ENCODE measurements at regions of chr15 and their contacts with region 1.

Region 1: GRCh38 chr15:90931737-90932659 is at the start of gene HDDC3:
- DNase-seq: peak; percentile 86 to 93 (median 88)
- H3K4me3 ChIP-seq: peak within 1 kb of the TSS; percentile 95 to 96
- H3K4me3 Mint-ChIP-seq: peak within 1 kb of the TSS; percentile 94 to 99 (median 98)
- H3K27ac ChIP-seq: peak within 1 kb of the TSS; percentile 82
- H3K27ac Mint-ChIP-seq: peak within 1 kb of the TSS; percentile 87 to 99 (median 99)
- H3K4me1 ChIP-seq: peaks cover 58% of the 10 kb centered on the region
- H3K4me1 Mint-ChIP-seq: peaks cover 35 to 77% (median 54%) of the 10 kb centered on the region in 4 donors
- H3K27me3 ChIP-seq: no peaks in the 10 kb centered on the region
- H3K27me3 Mint-ChIP-seq: no peaks in the 10 kb centered on the region
- total RNA-seq, gene HDDC3: 27.4 to 28.3 TPM

Region 2: GRCh38 chr15:90387537-90388461 is 544.2 kb before region 1 on chr15 and contains the start of gene IQGAP1:
- CTCF ChIA-PET with region 1: no interaction called
- POLR2A ChIA-PET with region 1: interaction called, 10 read pairs
- intact Hi-C with region 1: no loop called
- DNase-seq: peak; percentile 92 to 97 (median 95)
- H3K4me3 ChIP-seq: peak within 1 kb of the TSS; percentile 70 to 85
- H3K4me3 Mint-ChIP-seq: peak within 1 kb of the TSS; percentile 89 to 96 (median 93)
- H3K27ac ChIP-seq: peak within 1 kb of the TSS; percentile 84
- H3K27ac Mint-ChIP-seq: peak within 1 kb of the TSS; percentile 93 to 98 (median 96)
- H3K4me1 ChIP-seq: peaks cover 42% of the 10 kb centered on the region
- H3K4me1 Mint-ChIP-seq: peaks cover 36 to 54% (median 48%) of the 10 kb centered on the region in 4 donors
- H3K27me3 ChIP-seq: no peaks in the 10 kb centered on the region
- H3K27me3 Mint-ChIP-seq: no peaks in the 10 kb centered on the region
- total RNA-seq, gene IQGAP1: 128 to 132 TPM

Region 3: GRCh38 chr15:90808517-90809235 is 123.3 kb before region 1 on chr15:
- CTCF ChIA-PET with region 1: no interaction called
- POLR2A ChIA-PET with region 1: no interaction called
- intact Hi-C with region 1: no loop called
- DNase-seq: no peak
- H3K4me3 ChIP-seq: no peak overlapping the region
- H3K4me3 Mint-ChIP-seq: peak overlapping the region in 1 of 8 donors; percentile 21
- H3K27ac ChIP-seq: no peak overlapping the region
- H3K27ac Mint-ChIP-seq: peak overlapping the region in 2 of 7 donors; percentile 25 to 29
- H3K4me1 ChIP-seq: peaks cover 6% of the 10 kb centered on the region
- H3K4me1 Mint-ChIP-seq: peaks cover 11 to 15% (median 12%) of the 10 kb centered on the region in 4 donors
- H3K27me3 ChIP-seq: no peaks in the 10 kb centered on the region
- H3K27me3 Mint-ChIP-seq: no peaks in the 10 kb centered on the region

Region 4: GRCh38 chr15:90820798-90821149 is 111.2 kb before region 1 on chr15:
- CTCF ChIA-PET with region 1: no interaction called
- POLR2A ChIA-PET with region 1: no interaction called
- intact Hi-C with region 1: no loop called
- DNase-seq: no peak
- H3K4me3 ChIP-seq: no peak overlapping the region
- H3K4me3 Mint-ChIP-seq: no peak overlapping the region
- H3K27ac ChIP-seq: no peak overlapping the region
- H3K27ac Mint-ChIP-seq: peak overlapping the region in 1 of 7 donors; percentile 64
- H3K4me1 ChIP-seq: peaks cover 21% of the 10 kb centered on the region
- H3K4me1 Mint-ChIP-seq: peaks cover 1 to 17% (median 10%) of the 10 kb centered on the region in 4 donors
- H3K27me3 ChIP-seq: no peaks in the 10 kb centered on the region
- H3K27me3 Mint-ChIP-seq: no peaks in the 10 kb centered on the region

Region 5: GRCh38 chr15:90869601-90870353 is 62.2 kb before region 1 on chr15:
- CTCF ChIA-PET with region 1: interaction called, 4 read pairs
- POLR2A ChIA-PET with region 1: interaction called, 11 read pairs
- intact Hi-C with region 1: no loop called
- DNase-seq: peak in 1 of 5 donors; percentile 69
- H3K4me3 ChIP-seq: peak overlapping the region in 1 of 2 donors; percentile 42
- H3K4me3 Mint-ChIP-seq: peak overlapping the region; percentile 84 to 96 (median 88)
- H3K27ac ChIP-seq: peak overlapping the region; percentile 68
- H3K27ac Mint-ChIP-seq: peak overlapping the region; percentile 92 to 98 (median 94)
- H3K4me1 ChIP-seq: peaks cover 46% of the 10 kb centered on the region
- H3K4me1 Mint-ChIP-seq: peaks cover 23 to 65% (median 40%) of the 10 kb centered on the region in 4 donors
- H3K27me3 ChIP-seq: no peaks in the 10 kb centered on the region
- H3K27me3 Mint-ChIP-seq: no peaks in the 10 kb centered on the region

Region 6: DNA sequence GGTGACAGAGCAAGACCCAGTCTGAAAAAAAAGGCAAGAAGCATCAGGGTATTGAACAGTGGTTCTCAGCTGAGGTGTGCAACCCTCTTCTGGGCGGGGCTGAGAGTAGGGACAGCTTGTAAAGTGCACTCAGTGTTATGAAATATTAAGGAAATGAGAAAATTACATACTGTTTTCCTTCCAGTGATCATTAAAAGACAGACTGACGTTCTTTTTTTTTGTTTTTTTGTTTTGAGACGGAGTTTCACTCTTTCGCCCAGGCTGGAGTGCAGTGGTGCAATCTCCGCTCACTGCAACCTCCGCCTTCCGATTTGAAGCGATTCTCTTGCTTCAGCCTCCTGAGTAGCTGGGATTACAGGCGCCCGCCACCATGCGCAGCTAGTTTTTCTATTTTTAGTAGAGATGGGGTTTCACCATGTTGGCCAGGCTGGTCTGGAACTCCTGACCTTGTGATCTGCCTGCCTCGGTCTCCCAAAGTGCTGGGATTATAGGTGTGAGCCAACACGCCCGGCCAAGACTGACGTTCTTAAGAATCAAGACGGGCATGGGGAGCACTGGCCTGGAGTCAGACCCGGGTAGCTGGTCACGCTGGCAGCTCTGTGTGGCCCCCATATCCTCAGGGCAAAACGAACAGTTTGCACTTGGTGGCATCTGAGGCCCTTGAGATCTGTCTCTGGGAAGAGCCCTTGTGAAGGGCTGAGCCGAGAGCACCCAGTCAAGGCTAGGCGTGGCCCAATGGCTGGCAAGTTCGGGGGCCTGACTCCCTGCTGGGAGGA is 17.5 kb before region 1 on chr15:
- CTCF ChIA-PET with region 1: interaction called, 344 read pairs
- POLR2A ChIA-PET with region 1: interaction called, 40 read pairs
- intact Hi-C with region 1: no loop called
- DNase-seq: no peak
- H3K4me3 ChIP-seq: no peak overlapping the region
- H3K4me3 Mint-ChIP-seq: no peak overlapping the region
- H3K27ac ChIP-seq: no peak overlapping the region
- H3K27ac Mint-ChIP-seq: peak overlapping the region in 2 of 7 donors; percentile 46 to 57
- H3K4me1 ChIP-seq: no peaks in the 10 kb centered on the region
- H3K4me1 Mint-ChIP-seq: no peaks in the 10 kb centered on the region
- H3K27me3 ChIP-seq: no peaks in the 10 kb centered on the region
- H3K27me3 Mint-ChIP-seq: no peaks in the 10 kb centered on the region

Region 7: GRCh38 chr15:90994417-90995311 is 62.7 kb after region 1 on chr15 and contains the start of gene PRC1:
- CTCF ChIA-PET with region 1: interaction called, 6 read pairs
- POLR2A ChIA-PET with region 1: interaction called, 14 read pairs
- intact Hi-C with region 1: loop called (anchors 1 kb)
- DNase-seq: peak; percentile 96 to 98 (median 97)
- H3K4me3 ChIP-seq: peak within 1 kb of the TSS; percentile 73 to 90
- H3K4me3 Mint-ChIP-seq: peak within 1 kb of the TSS; percentile 98 to 100 (median 99)
- H3K27ac ChIP-seq: peak within 1 kb of the TSS; percentile 88
- H3K27ac Mint-ChIP-seq: peak within 1 kb of the TSS; percentile 79 to 99 (median 99)
- H3K4me1 ChIP-seq: peaks cover 9% of the 10 kb centered on the region
- H3K4me1 Mint-ChIP-seq: peaks cover 7 to 32% (median 21%) of the 10 kb centered on the region in 4 donors
- H3K27me3 ChIP-seq: no peaks in the 10 kb centered on the region
- H3K27me3 Mint-ChIP-seq: no peaks in the 10 kb centered on the region
- total RNA-seq, gene PRC1: 8.1 to 8.6 TPM

Region 8: DNA sequence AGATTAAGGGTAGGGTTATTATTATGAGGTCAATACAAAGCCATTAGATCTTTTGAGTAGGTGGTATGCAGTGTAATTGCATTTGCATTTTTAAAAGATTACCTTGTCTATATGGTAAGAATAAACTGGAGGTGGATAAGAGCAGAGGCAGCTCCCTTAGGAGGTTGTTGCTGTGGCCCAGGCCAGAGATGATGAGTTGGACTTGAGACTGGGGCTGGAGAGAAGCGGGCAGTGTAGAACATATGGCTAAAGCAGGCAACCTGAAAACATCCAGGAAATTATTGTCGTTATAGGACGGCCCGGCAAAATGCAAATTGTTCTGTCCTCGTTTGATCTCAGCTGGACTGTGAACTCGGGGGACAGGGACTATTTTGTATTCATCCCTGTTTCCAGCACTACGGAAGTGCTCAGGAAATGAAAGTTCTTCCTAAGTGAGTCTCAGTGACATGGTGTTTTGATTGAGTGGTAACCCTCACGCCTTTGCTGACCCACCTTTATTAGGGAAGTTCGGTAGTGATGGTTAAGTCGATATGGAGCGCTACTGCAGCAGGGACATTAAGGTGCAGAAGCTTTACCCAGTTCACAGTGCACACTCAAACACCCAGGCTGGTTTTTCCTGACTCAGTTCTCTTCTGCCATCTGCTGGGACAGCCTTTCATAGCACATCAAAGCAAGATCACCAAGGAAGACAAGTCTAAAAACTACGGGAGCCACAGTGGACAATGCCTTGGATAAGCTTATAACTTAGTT is 117.6 kb after region 1 on chr15:
- CTCF ChIA-PET with region 1: interaction called, 14 read pairs
- POLR2A ChIA-PET with region 1: interaction called, 3 read pairs
- intact Hi-C with region 1: no loop called
- DNase-seq: peak; percentile 50 to 66 (median 60)
- H3K4me3 ChIP-seq: no peak overlapping the region
- H3K4me3 Mint-ChIP-seq: no peak overlapping the region
- H3K27ac ChIP-seq: no peak overlapping the region
- H3K27ac Mint-ChIP-seq: no peak overlapping the region
- H3K4me1 ChIP-seq: peaks cover 21% of the 10 kb centered on the region
- H3K4me1 Mint-ChIP-seq: peaks cover 11 to 30% (median 26%) of the 10 kb centered on the region in 4 donors
- H3K27me3 ChIP-seq: no peaks in the 10 kb centered on the region
- H3K27me3 Mint-ChIP-seq: peaks cover 8 to 10% of the 10 kb centered on the region in 2 donors

Region 9: DNA sequence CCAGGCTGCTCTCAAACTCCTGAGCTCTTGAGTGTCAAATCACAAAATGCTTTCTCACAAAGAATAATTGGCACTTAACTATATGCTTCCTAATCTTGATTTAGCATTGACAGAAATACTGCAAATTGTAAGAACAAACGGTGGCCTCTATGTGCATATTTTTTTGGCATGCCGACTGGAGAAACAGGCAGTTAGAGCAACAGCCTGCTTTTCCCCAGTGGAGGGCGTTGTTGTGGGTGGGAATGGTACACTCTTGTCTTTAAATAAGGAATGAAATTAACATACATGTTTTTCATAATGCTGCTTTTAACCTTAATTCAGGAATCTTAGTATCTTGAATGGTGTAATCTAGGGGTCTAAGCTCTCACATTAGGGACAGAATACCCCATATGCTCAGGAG is 137.0 kb after region 1 on chr15:
- CTCF ChIA-PET with region 1: no interaction called
- POLR2A ChIA-PET with region 1: no interaction called
- intact Hi-C with region 1: no loop called
- DNase-seq: no peak
- H3K4me3 ChIP-seq: no peak overlapping the region
- H3K4me3 Mint-ChIP-seq: no peak overlapping the region
- H3K27ac ChIP-seq: no peak overlapping the region
- H3K27ac Mint-ChIP-seq: no peak overlapping the region
- H3K4me1 ChIP-seq: no peaks in the 10 kb centered on the region
- H3K4me1 Mint-ChIP-seq: no peaks in the 10 kb centered on the region
- H3K27me3 ChIP-seq: peaks cover 5% of the 10 kb centered on the region
- H3K27me3 Mint-ChIP-seq: peaks cover 18% of the 10 kb centered on the region in 2 donors

Measured in CD4-positive, alpha-beta memory T cell (primary cell).